ENCODE measurements at regions of chr4 and their contacts with region 1.

Region 1: DNA sequence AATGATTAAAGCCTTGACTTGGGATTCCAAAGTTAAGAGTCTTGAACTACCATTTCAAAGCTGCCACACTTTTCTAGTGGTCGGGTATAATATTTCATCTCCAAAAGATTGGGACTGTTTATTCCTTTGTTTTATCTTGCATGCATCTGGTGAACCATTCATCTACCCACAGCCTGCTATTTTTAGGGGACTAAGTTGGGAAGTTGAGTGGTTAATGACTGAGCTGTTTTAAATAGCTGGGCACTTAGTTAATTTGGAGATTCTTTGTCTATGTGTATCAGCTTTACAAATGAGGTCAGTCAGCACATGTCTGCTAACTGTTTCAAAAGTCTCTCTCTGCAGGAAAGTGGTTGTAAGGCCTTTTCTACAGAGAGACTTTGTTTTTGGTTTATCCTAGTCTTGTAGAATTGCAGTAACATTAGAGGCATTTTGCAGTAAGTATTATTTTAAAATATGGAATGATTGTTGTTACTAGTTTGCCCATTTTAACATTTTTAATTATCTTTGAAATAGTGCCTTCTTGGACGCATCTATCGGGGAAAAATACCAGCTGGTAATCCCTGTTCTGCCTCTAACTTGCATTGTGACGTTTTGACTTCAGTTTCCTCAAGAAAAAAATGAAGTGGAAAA is 8.2 kb downstream of the BMP2K start:
- DNase-seq: no peak
- ATAC-seq: peak; percentile 44 to 77 (median 76)
- H3K4me3 ChIP-seq: peak overlapping the region in 2 of 12 donors; percentile 14 to 21
- H3K27ac ChIP-seq: peak overlapping the region in 10 of 12 donors; percentile 0 to 61 (median 45)
- H3K4me1 ChIP-seq: peaks cover 0 to 77% (median 41%) of the 10 kb centered on the region in 12 donors
- H3K27me3 ChIP-seq: no peaks in the 10 kb centered on the region
- CTCF ChIP-seq: no peak
- POLR2A ChIP-seq: no peak

Region 2: GRCh38 chr4:78829296-78829695 is 44.9 kb after region 1 on chr4:
- intact Hi-C with region 1: loop called in 1 of 10 experiments (anchors 10 kb)
- DNase-seq: no peak
- ATAC-seq: no peak
- H3K4me3 ChIP-seq: no peak overlapping the region
- H3K27ac ChIP-seq: no peak overlapping the region
- H3K4me1 ChIP-seq: peaks cover 0 to 7% (median 0%) of the 10 kb centered on the region in 12 donors
- H3K27me3 ChIP-seq: no peaks in the 10 kb centered on the region
- CTCF ChIP-seq: no peak
- POLR2A ChIP-seq: no peak

Region 3: GRCh38 chr4:78845472-78845871 is 61.1 kb after region 1 on chr4:
- intact Hi-C with region 1: loop called in 2 of 10 experiments (anchors 5 to 10 kb)
- DNase-seq: no peak
- ATAC-seq: no peak
- H3K4me3 ChIP-seq: no peak overlapping the region
- H3K27ac ChIP-seq: no peak overlapping the region
- H3K4me1 ChIP-seq: peaks cover 0 to 12% (median 0%) of the 10 kb centered on the region in 12 donors
- H3K27me3 ChIP-seq: no peaks in the 10 kb centered on the region
- CTCF ChIP-seq: no peak
- POLR2A ChIP-seq: no peak

Measured in heart left ventricle (tissue), 16 donors.